ENCODE measurements at regions of chr12 and their contacts with region 1.

Region 1: GRCh38 chr12:110907583-110907982 is 12.8 kb downstream of the MYL2 start:
- DNase-seq: no peak
- CTCF ChIP-seq: no peak

Region 2: GRCh38 chr12:110896559-110896958 is 11.0 kb before region 1 on chr12:
- CTCF ChIA-PET with region 1: interaction called, 10 read pairs
- POLR2A ChIA-PET with region 1: no interaction called
- DNase-seq: no peak
- CTCF ChIP-seq: no peak

Measured in GM10248 (cell line).